A673 (cell line): ENCODE measurements at regions of chr12 and their contacts with region 1.

Region 1: GRCh38 chr12:94149119-94149780 is 873 bp downstream of the PLXNC1 start:
- DNase-seq: no peak
- H3K4me3 ChIP-seq: peak overlapping the region; percentile 38
- H3K27ac ChIP-seq: no peak overlapping the region
- H3K4me1 ChIP-seq: no peaks in the 10 kb centered on the region
- H3K27me3 ChIP-seq: peaks cover 92% of the 10 kb centered on the region
- CTCF ChIP-seq: 0 out of 2 replicates have a peak, but pooled peaks have one; percentile 30

Region 2: DNA sequence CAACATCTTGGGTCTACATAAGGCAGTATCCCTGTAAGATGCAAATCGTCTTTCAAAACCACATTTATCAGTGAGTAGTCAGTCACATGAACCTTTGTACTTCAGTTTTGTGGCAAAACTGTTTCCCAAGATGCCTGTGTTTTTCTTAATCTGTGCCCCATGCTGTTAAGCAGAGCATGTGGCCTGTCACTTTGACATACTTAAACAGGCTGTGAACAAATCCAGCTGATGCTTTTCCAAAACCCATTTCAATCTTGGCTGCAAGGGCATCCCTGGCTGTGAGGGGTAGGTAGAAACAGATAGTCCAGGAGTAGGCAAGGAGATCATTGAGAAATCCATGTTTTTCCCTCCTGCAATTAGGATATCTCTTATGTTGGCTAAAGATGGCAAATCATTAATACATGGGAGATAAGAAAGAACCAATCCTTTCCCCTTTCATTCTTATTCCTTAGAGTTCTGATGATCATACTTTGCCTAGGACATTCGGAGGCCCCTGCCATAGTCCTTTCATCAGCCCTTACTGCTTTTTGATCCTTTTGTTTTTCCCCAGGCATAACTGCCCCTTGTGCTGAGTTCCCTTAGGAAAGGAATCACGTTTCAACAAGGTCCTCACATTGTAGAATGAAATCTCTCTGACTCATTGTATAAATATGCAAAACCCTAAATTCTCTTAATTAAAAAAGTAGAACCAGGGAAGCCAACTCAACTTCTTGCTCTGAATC is 1099.1 kb before region 1 on chr12:
- CTCF ChIA-PET with region 1: no interaction called
- POLR2A ChIA-PET with region 1: no interaction called
- intact Hi-C with region 1: no loop called
- DNase-seq: peak; percentile 71
- H3K4me3 ChIP-seq: no peak overlapping the region
- H3K27ac ChIP-seq: no peak overlapping the region
- H3K4me1 ChIP-seq: peaks cover 14% of the 10 kb centered on the region
- H3K27me3 ChIP-seq: no peaks in the 10 kb centered on the region
- CTCF ChIP-seq: no peak

Region 3: GRCh38 chr12:94435511-94435927 is 286.3 kb after region 1 on chr12:
- CTCF ChIA-PET with region 1: no interaction called
- POLR2A ChIA-PET with region 1: no interaction called
- intact Hi-C with region 1: loop called (anchors 5 kb)
- DNase-seq: no peak
- H3K4me3 ChIP-seq: no peak overlapping the region
- H3K27ac ChIP-seq: no peak overlapping the region
- H3K4me1 ChIP-seq: no peaks in the 10 kb centered on the region
- H3K27me3 ChIP-seq: no peaks in the 10 kb centered on the region
- CTCF ChIP-seq: no peak

Region 4: GRCh38 chr12:94532490-94533422 is 383.5 kb after region 1 on chr12:
- CTCF ChIA-PET with region 1: interaction called, 4 read pairs
- POLR2A ChIA-PET with region 1: no interaction called
- intact Hi-C with region 1: loop called (anchors 1 kb)
- DNase-seq: peak; percentile 76
- H3K4me3 ChIP-seq: no peak overlapping the region
- H3K27ac ChIP-seq: no peak overlapping the region
- H3K4me1 ChIP-seq: no peaks in the 10 kb centered on the region
- H3K27me3 ChIP-seq: no peaks in the 10 kb centered on the region
- CTCF ChIP-seq: peak; percentile 88

Region 5: GRCh38 chr12:94699801-94700200 is 550.6 kb after region 1 on chr12:
- CTCF ChIA-PET with region 1: no interaction called
- POLR2A ChIA-PET with region 1: no interaction called
- intact Hi-C with region 1: no loop called
- DNase-seq: no peak
- H3K4me3 ChIP-seq: no peak overlapping the region
- H3K27ac ChIP-seq: no peak overlapping the region
- H3K4me1 ChIP-seq: no peaks in the 10 kb centered on the region
- H3K27me3 ChIP-seq: no peaks in the 10 kb centered on the region
- CTCF ChIP-seq: no peak

Region 6: GRCh38 chr12:94762259-94762942 is 613.2 kb after region 1 on chr12:
- CTCF ChIA-PET with region 1: no interaction called
- POLR2A ChIA-PET with region 1: no interaction called
- intact Hi-C with region 1: loop called (anchors 10 kb)
- DNase-seq: no peak
- H3K4me3 ChIP-seq: no peak overlapping the region
- H3K27ac ChIP-seq: no peak overlapping the region
- H3K4me1 ChIP-seq: no peaks in the 10 kb centered on the region
- H3K27me3 ChIP-seq: no peaks in the 10 kb centered on the region
- CTCF ChIP-seq: no peak